Activated naive CD4-positive, alpha-beta T cell treated with anti-CD3 and anti-CD28 coated beads for 36 hours (primary cell): ENCODE measurements at regions of chr15 and their contacts with region 1.

Region 1: DNA sequence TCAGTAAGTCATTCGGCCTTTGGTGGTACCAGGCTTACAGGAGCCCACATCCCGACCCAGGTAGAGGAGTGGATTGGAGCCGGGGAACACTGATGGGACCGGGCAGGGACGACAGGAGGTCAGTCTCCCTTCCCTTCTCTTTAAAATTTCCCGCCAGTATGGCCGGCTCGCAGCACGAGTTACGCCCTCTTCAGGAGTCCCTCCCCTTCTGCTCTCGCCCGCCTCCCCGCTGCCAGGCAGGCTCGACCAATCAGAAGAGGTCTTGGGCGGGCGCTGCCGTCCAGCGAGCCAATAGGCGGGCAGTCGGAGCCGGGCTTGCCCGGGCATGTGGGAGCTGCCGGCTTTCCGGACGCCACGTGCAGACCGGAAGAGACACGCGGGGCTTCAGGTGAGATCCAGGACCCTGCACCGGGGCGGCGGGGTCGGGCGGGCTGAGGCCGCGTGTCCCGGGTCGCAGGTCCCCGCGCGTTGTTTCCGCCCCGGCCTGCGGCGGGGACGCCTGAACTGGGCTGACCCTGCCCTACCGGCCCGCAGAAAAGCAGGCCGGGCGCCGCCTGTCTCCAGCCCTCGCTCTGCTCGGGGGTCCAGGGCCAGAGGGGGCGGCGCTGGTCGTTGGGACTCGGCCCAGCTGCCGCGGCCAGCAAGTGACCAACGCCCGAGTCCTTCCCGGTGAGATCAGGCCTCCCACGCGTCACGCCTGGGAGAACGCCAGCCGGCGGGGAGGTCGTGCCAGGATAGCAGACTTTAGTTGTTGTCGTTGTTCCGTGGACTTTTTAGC is at the start of gene AEN:
- DNase-seq: peak; percentile 96
- H3K4me3 Mint-ChIP-seq: peak within 1 kb of the TSS; percentile 90
- H3K27ac Mint-ChIP-seq: peak within 1 kb of the TSS; percentile 97
- H3K4me1 Mint-ChIP-seq: peaks cover 35% of the 10 kb centered on the region
- H3K27me3 Mint-ChIP-seq: peaks cover 4% of the 10 kb centered on the region
- total RNA-seq, gene AEN: 85.2 to 87.2 TPM

Region 2: DNA sequence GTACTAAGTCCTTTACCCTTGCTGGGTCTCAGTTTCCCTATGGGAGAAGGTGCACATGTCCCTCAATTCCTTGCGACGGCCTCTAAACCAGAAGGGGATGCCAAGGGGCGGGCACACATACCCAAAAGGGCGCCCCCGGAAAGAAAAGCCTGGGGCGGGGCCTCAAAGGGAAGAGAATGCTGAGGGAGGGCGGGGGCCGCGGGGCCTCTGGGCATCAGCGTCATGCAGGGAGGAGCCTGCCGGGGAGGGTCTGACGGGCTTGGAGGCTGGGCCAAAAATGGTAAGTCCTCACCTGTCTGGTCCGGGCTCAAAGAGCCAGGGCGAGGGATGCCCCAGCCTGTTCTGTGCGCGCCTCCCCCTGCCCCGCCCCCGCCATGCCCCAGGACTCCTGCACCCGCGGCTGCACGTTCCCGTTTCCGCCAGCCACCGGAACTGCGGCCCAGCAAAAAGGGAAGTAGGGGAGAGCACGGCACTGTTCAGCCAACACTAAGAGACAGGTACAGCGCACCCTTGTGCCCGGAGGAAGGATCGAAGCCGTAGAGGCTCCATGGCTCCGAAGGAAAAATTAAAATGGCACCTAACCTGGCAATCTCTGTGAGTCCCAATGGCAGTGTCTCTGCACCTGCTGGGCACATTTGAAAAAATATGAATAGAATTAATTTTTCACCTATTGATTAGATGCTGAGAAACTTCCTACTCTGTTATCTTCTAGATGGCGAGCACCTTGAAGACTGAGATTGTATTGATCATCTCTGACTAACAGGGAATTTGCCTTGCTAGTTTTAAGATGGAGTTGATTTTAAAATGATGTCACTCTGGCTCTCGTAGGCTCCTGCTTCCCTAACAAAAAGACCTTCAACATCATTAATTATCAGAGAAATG is 74.7 kb before region 1 on chr15 and contains the start of gene DET1:
- CTCF ChIA-PET with region 1: no interaction called
- intact Hi-C with region 1: loop called (anchors 1 kb)
- DNase-seq: peak; percentile 98
- H3K4me3 Mint-ChIP-seq: peak within 1 kb of the TSS; percentile 90
- H3K27ac Mint-ChIP-seq: peak within 1 kb of the TSS; percentile 90
- H3K4me1 Mint-ChIP-seq: peaks cover 15% of the 10 kb centered on the region
- H3K27me3 Mint-ChIP-seq: no peaks in the 10 kb centered on the region
- total RNA-seq, gene DET1: 2.0 to 2.9 TPM

Region 3: DNA sequence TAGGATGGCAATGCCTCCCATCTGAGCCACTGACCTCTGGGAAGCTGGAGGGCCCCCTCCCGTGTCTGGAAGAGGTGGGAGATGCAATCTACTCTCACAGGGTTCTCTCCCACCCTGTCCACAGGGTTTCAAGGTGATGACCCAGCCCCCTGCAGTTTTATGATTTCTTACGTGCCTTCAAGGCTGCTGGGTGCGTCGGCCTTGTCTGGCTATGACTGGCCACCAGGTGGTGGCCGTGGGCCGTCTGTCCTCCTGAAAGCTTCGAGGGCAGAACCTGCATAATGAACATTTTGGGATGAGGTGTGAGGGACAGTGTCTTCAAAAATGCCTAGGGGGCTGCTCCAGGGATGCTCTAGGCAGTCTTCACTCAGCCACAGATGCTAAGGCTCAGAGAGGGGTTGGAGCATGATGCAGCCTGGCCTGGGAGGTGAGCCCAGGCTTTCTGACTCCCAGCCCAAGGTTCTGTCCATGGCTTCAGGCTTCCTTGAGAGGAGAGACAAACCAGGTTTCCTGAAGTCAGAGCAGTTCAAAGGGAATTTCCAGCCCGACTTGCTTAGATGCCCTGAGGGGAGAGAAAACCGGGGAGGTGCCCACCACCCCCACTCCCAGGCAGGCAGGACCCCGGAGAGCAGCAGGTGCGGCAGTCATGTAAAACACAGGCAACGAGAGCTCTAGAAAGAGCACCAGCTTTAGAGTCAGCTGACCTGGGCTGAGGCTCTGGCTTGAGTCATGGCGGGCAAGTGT is 36.3 kb after region 1 on chr15:
- CTCF ChIA-PET with region 1: interaction called, 12 read pairs
- intact Hi-C with region 1: no loop called
- DNase-seq: no peak
- H3K4me3 Mint-ChIP-seq: no peak overlapping the region
- H3K27ac Mint-ChIP-seq: peak overlapping the region; percentile 61
- H3K4me1 Mint-ChIP-seq: peaks cover 80% of the 10 kb centered on the region
- H3K27me3 Mint-ChIP-seq: no peaks in the 10 kb centered on the region

Region 4: GRCh38 chr15:88805031-88805782 is 184.0 kb after region 1 on chr15:
- CTCF ChIA-PET with region 1: no interaction called
- intact Hi-C with region 1: loop called (anchors 1 kb)
- DNase-seq: peak; percentile 50
- H3K4me3 Mint-ChIP-seq: no peak overlapping the region
- H3K27ac Mint-ChIP-seq: no peak overlapping the region
- H3K4me1 Mint-ChIP-seq: peaks cover 3% of the 10 kb centered on the region
- H3K27me3 Mint-ChIP-seq: peaks cover 45% of the 10 kb centered on the region

Region 5: DNA sequence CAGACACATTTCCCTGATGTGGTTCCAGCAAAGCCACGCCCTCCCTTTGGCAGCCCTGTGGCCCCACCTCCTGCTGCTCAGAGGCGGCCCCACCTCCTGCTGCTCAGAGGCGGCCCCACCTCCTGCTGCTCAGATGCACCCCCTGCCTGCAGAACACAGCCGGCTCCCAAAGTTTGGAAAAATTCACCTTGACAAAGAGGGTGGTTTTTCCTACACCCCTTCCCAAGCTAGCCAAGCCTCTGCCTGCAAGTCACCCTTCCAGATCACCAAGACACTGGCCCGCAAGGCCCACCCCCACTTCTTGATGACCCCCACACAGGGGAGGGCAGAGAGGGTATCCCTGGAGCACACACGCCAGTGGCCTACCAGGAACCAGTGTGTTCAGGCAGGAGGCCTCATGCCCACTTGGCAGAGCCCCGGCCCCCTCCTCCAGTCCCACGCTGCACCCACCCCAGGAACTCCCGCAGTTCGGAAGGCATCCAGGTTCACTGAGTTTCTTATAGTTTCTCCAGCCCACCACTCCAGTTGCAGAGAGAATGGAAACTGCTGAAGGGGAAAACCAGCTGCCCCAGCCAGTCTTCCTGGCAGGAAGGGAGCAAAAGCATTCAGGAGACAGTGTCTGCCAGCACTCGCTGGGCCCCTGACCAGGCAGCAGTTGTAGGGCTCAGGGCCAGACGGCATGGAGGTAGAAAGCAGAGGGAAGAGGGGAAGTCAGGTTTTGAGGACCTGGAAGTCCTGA is 276.4 kb after region 1 on chr15:
- CTCF ChIA-PET with region 1: interaction called, 4 read pairs
- intact Hi-C with region 1: loop called (anchors 2 kb)
- DNase-seq: peak; percentile 84
- H3K4me3 Mint-ChIP-seq: no peak overlapping the region
- H3K27ac Mint-ChIP-seq: no peak overlapping the region
- H3K4me1 Mint-ChIP-seq: peaks cover 43% of the 10 kb centered on the region
- H3K27me3 Mint-ChIP-seq: no peaks in the 10 kb centered on the region

Region 6: GRCh38 chr15:89087830-89088604 is 466.8 kb after region 1 on chr15 and contains the start of gene ABHD2:
- CTCF ChIA-PET with region 1: no interaction called
- intact Hi-C with region 1: loop called (anchors 5 kb)
- DNase-seq: peak; percentile 99
- H3K4me3 Mint-ChIP-seq: no peak within 1 kb of the TSS
- H3K27ac Mint-ChIP-seq: peak within 1 kb of the TSS; percentile 21
- H3K4me1 Mint-ChIP-seq: peaks cover 33% of the 10 kb centered on the region
- H3K27me3 Mint-ChIP-seq: no peaks in the 10 kb centered on the region
- total RNA-seq, gene ABHD2: 57.2 to 64.9 TPM

Region 7: DNA sequence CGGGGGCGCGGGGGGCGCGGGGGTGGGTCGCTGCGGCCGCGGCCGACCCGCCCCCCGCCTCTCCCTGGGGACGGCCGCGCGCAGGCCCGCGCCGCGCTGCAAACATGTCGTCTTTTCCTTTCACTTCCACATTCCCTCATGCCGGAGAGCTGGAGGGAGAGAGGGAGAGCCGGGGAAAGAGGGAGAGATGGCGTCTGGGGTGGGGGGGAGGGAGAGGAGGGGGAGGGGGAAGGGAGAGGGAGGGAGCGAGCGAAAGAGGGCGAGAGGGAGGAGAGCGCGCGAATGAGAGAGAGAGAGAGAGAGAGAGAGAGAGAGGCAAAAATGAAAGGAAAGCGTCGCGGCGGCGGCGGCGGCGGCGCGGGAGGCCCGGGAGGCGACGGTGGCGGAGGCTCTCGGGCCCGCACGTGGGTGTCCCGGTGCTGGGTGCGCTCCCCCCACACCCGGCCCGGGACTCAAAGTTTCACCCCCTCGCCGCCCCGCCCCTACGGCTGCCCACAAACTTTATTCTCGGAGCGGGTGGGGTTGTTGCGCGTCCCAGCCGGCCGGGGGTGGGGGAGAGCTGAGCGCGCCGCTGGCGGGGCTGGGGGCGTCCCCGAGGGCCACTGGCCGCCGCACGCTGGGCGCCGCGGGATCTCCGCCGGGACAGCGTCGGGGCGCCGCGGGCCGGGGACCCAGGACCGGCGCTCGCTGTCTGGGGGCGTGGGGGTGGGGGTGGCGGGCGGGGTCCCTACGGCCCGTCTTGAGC is 1380.7 kb after region 1 on chr15:
- CTCF ChIA-PET with region 1: no interaction called
- intact Hi-C with region 1: loop called (anchors 10 kb)
- DNase-seq: peak; percentile 70
- H3K4me3 Mint-ChIP-seq: peak overlapping the region; percentile 82
- H3K27ac Mint-ChIP-seq: peak overlapping the region; percentile 75
- H3K4me1 Mint-ChIP-seq: peaks cover 57% of the 10 kb centered on the region
- H3K27me3 Mint-ChIP-seq: no peaks in the 10 kb centered on the region